Right cardiac atrium (tissue), 5 donors: ENCODE measurements at regions of chr1 and their contacts with region 1.

Region 1: GRCh38 chr1:68141071-68142021 is 90.9 kb upstream of the DIRAS3 start:
- DNase-seq: no peak
- ATAC-seq: peak; percentile 75 to 89
- H3K4me3 ChIP-seq: no peak overlapping the region
- H3K27ac ChIP-seq: peak overlapping the region; percentile 91
- H3K4me1 ChIP-seq: peaks cover 7% of the 10 kb centered on the region
- H3K27me3 ChIP-seq: no peaks in the 10 kb centered on the region

Region 2: DNA sequence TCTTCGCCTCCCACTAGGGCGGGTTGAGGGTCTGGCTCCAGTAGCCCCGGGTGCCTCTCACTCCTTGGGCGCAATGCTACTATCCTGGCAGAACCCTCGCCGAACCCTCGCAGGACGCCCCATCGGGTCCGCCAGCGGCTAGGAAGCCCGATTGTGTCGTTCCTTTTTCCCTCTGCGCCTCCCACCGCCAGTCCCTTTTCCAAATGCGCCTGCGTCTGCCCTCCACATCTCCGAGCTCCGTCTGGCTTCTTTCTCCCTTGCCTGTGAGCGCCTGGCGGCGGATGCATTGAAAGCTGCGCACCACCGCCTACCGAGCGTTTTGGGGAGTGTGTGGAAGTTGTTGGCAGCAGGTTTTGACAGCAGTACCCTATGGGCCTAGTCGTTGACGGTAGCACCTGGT is 89.9 kb before region 1 on chr1:
- intact Hi-C with region 1: no loop called
- DNase-seq: peak; percentile 57 to 79 (median 79)
- ATAC-seq: peak; percentile 77 to 79
- H3K4me3 ChIP-seq: no peak overlapping the region
- H3K27ac ChIP-seq: no peak overlapping the region
- H3K4me1 ChIP-seq: no peaks in the 10 kb centered on the region
- H3K27me3 ChIP-seq: no peaks in the 10 kb centered on the region

Region 3: GRCh38 chr1:68213843-68214242 is 72.5 kb after region 1 on chr1:
- intact Hi-C with region 1: loop called in 1 of 4 experiments (anchors 10 kb)
- DNase-seq: peak; percentile 73 to 84 (median 81)
- ATAC-seq: peak; percentile 65 to 77
- H3K4me3 ChIP-seq: no peak overlapping the region
- H3K27ac ChIP-seq: peak overlapping the region; percentile 39
- H3K4me1 ChIP-seq: peaks cover 8% of the 10 kb centered on the region
- H3K27me3 ChIP-seq: no peaks in the 10 kb centered on the region